Activated T-helper 1 cell treated with anti-CD3 and anti-CD28 coated beads, Interleukin-12 subunit alpha, Interleukin-12 subunit beta, Interleukin-2, Interleukin-4 antibody, amounts not matched to agents 30 ng/mL and 10 ng/mL and 1 ng/mL, durations not matched to agents 14 hours and 24 hours and 36 hours (primary cell): ENCODE measurements at regions of chr14 and their contacts with region 1.

Region 1: GRCh38 chr14:64708148-64709004 is 4.2 kb downstream of the PLEKHG3 start:
- DNase-seq: peak; percentile 57
- H3K4me3 Mint-ChIP-seq: peak overlapping the region; percentile 47
- H3K27ac Mint-ChIP-seq: peak overlapping the region; percentile 83
- H3K4me1 Mint-ChIP-seq: peaks cover 70% of the 10 kb centered on the region
- H3K27me3 Mint-ChIP-seq: peaks cover 10% of the 10 kb centered on the region

Region 2: GRCh38 chr14:64726585-64726890 is 18.2 kb after region 1 on chr14:
- intact Hi-C with region 1: loop called (anchors 2 kb)
- DNase-seq: no peak
- H3K4me3 Mint-ChIP-seq: no peak overlapping the region
- H3K27ac Mint-ChIP-seq: no peak overlapping the region
- H3K4me1 Mint-ChIP-seq: peaks cover 77% of the 10 kb centered on the region
- H3K27me3 Mint-ChIP-seq: peaks cover 1% of the 10 kb centered on the region